ENCODE measurements at regions of chr4 and their contacts with region 1.

Region 1: GRCh38 chr4:81405894-81406401 is 65.8 kb downstream of the RASGEF1B start:
- DNase-seq: peak in 8 of 14 experiments; percentile 6 to 85 (median 34)
- ATAC-seq: peak; percentile 89
- H3K4me3 ChIP-seq: peak overlapping the region; percentile 1
- H3K4me3 Mint-ChIP-seq: no peak overlapping the region
- H3K27ac ChIP-seq: no peak overlapping the region
- H3K27ac Mint-ChIP-seq: no peak overlapping the region
- H3K4me1 ChIP-seq: no peaks in the 10 kb centered on the region
- H3K4me1 Mint-ChIP-seq: peaks cover 4% of the 10 kb centered on the region
- H3K27me3 ChIP-seq: no peaks in the 10 kb centered on the region
- H3K27me3 Mint-ChIP-seq: no peaks in the 10 kb centered on the region
- CTCF ChIP-seq: peak; percentile 99

Region 2: DNA sequence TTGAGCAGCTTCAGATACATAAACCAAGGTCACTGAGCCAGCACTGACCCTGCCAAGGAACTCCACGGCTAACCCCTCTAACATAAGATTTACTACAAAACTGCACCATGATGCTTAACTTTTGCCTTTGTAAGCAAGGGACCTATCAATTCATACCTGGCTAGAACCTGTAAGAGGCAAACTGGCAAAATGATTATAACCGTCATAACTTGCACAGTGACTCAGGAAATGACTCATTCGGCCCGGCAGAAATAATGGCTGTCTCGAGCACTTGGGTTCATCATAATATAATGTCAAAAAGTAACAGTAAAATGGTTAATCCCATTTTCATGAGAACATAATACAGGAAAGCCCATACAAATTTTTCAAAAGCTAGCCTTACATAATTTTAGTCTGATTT is 48.6 kb after region 1 on chr4:
- CTCF ChIA-PET with region 1: no interaction called
- POLR2A ChIA-PET with region 1: no interaction called
- intact Hi-C with region 1: no loop called
- DNase-seq: peak in 5 of 14 experiments; percentile 23 to 49 (median 46)
- ATAC-seq: peak; percentile 67
- H3K4me3 ChIP-seq: no peak overlapping the region
- H3K4me3 Mint-ChIP-seq: no peak overlapping the region
- H3K27ac ChIP-seq: no peak overlapping the region
- H3K27ac Mint-ChIP-seq: peak overlapping the region; percentile 22
- H3K4me1 ChIP-seq: no peaks in the 10 kb centered on the region
- H3K4me1 Mint-ChIP-seq: peaks cover 14% of the 10 kb centered on the region
- H3K27me3 ChIP-seq: no peaks in the 10 kb centered on the region
- H3K27me3 Mint-ChIP-seq: no peaks in the 10 kb centered on the region
- CTCF ChIP-seq: no peak

Region 3: GRCh38 chr4:81465395-81466340 is 59.7 kb after region 1 on chr4:
- CTCF ChIA-PET with region 1: no interaction called
- POLR2A ChIA-PET with region 1: no interaction called
- intact Hi-C with region 1: loop called (anchors 2 to 5 kb)
- DNase-seq: no peak
- ATAC-seq: no peak
- H3K4me3 ChIP-seq: no peak overlapping the region
- H3K4me3 Mint-ChIP-seq: no peak overlapping the region
- H3K27ac ChIP-seq: no peak overlapping the region
- H3K27ac Mint-ChIP-seq: no peak overlapping the region
- H3K4me1 ChIP-seq: peaks cover 9% of the 10 kb centered on the region
- H3K4me1 Mint-ChIP-seq: peaks cover 61% of the 10 kb centered on the region
- H3K27me3 ChIP-seq: no peaks in the 10 kb centered on the region
- H3K27me3 Mint-ChIP-seq: no peaks in the 10 kb centered on the region
- CTCF ChIP-seq: no peak

Region 4: GRCh38 chr4:81844717-81845116 is 438.8 kb after region 1 on chr4:
- CTCF ChIA-PET with region 1: interaction called, 4 read pairs
- POLR2A ChIA-PET with region 1: no interaction called
- intact Hi-C with region 1: loop called (anchors 1 kb)
- DNase-seq: peak; percentile 38 to 82 (median 58)
- ATAC-seq: peak; percentile 95
- H3K4me3 ChIP-seq: no peak overlapping the region
- H3K4me3 Mint-ChIP-seq: no peak overlapping the region
- H3K27ac ChIP-seq: no peak overlapping the region
- H3K27ac Mint-ChIP-seq: no peak overlapping the region
- H3K4me1 ChIP-seq: no peaks in the 10 kb centered on the region
- H3K4me1 Mint-ChIP-seq: no peaks in the 10 kb centered on the region
- H3K27me3 ChIP-seq: no peaks in the 10 kb centered on the region
- H3K27me3 Mint-ChIP-seq: no peaks in the 10 kb centered on the region
- CTCF ChIP-seq: peak; percentile 77

Region 5: DNA sequence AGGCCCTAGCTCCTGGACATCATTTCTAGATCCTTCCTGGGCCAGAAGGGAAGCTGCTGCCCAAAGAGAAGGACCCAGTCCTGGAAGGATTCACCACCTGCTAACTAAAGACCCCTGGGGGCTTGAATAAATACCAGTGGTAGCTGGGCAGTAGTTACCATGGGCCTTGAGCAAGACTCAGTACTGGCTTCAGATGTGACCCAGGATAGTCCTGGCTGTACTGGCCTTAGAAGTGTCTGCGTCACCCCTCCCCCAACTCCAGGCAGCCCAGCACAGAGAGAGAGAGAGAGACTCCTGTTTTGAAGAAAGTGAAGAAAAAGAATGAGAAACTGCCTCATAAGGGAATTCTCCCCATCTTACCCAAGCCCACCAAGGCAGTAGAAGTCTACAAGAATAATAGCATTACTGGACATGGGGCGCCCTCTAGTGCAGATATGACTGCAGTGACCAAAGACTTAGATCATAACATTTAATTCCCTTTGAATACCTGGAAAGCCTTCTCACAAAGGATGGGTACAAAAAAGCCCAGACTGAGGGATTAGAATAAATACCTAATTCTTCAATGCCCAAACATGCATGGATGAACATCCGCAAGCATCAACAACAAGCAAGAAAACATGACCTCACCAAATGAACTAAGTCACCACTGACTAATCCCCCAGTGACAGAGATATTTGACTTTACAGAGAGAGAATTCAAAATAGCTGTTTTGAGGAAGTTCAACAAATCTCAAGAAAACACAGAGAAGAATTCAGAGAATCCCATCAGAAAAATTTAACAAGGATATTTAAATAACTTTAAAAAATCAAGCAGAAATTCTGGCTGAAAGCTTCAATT is 796.1 kb after region 1 on chr4:
- CTCF ChIA-PET with region 1: no interaction called
- POLR2A ChIA-PET with region 1: no interaction called
- intact Hi-C with region 1: loop called (anchors 1 to 2 kb)
- DNase-seq: peak in 13 of 14 experiments; percentile 5 to 72 (median 34)
- ATAC-seq: peak; percentile 65
- H3K4me3 ChIP-seq: no peak overlapping the region
- H3K4me3 Mint-ChIP-seq: no peak overlapping the region
- H3K27ac ChIP-seq: no peak overlapping the region
- H3K27ac Mint-ChIP-seq: no peak overlapping the region
- H3K4me1 ChIP-seq: peaks cover 5% of the 10 kb centered on the region
- H3K4me1 Mint-ChIP-seq: peaks cover 10% of the 10 kb centered on the region
- H3K27me3 ChIP-seq: no peaks in the 10 kb centered on the region
- H3K27me3 Mint-ChIP-seq: peaks cover 8% of the 10 kb centered on the region
- CTCF ChIP-seq: peak; percentile 62

Region 6: DNA sequence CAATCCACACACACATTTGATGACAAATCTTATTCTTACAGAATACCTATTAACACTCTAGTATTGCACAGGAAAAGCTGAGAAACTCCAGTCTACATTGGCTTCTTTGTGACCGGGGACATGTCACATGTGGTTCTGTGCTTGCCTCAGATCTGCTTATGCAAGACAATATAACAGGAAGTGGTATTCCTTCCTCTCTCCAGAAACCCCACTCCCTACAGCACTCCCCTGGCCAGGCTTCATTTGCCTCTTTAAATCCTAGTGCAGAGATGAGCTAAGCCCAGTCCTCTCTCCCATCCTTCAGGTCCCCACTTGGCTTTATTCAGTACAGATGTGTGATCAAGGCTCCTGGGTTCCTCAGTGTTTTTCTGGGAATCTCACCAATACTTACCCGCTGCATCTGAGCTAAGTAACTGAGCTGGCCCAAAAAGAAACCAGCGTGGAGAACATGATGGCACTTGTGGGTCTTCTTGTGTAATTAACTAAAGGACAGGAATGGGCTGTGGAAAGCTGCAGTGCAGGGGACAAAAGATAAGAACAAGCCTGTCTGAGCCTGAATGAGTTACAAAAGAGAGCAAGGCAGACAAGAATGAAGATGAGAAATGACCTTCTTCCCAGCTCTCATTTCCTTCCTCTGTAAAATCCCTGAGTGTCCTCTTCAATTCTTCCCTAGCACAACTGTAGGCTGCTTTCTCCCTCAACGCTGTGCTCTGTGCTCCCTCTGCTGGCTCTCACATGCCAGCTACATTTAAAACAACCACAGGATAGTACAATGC is 862.3 kb after region 1 on chr4:
- CTCF ChIA-PET with region 1: no interaction called
- POLR2A ChIA-PET with region 1: no interaction called
- intact Hi-C with region 1: loop called (anchors 1 to 2 kb)
- DNase-seq: peak in 12 of 14 experiments; percentile 12 to 76 (median 34)
- ATAC-seq: peak; percentile 92
- H3K4me3 ChIP-seq: no peak overlapping the region
- H3K4me3 Mint-ChIP-seq: peak overlapping the region; percentile 70
- H3K27ac ChIP-seq: no peak overlapping the region
- H3K27ac Mint-ChIP-seq: peak overlapping the region; percentile 11
- H3K4me1 ChIP-seq: peaks cover 18% of the 10 kb centered on the region
- H3K4me1 Mint-ChIP-seq: peaks cover 34% of the 10 kb centered on the region
- H3K27me3 ChIP-seq: no peaks in the 10 kb centered on the region
- H3K27me3 Mint-ChIP-seq: no peaks in the 10 kb centered on the region
- CTCF ChIP-seq: peak; percentile 91

Region 7: GRCh38 chr4:82360298-82361177 is 954.6 kb after region 1 on chr4:
- CTCF ChIA-PET with region 1: no interaction called
- POLR2A ChIA-PET with region 1: no interaction called
- intact Hi-C with region 1: loop called (anchors 5 to 10 kb)
- DNase-seq: peak in 3 of 14 experiments; percentile 50 to 61 (median 61)
- ATAC-seq: peak; percentile 80
- H3K4me3 ChIP-seq: no peak overlapping the region
- H3K4me3 Mint-ChIP-seq: peak overlapping the region; percentile 36
- H3K27ac ChIP-seq: peak overlapping the region in 1 of 2 donors; percentile 7
- H3K27ac Mint-ChIP-seq: peak overlapping the region; percentile 60
- H3K4me1 ChIP-seq: peaks cover 25% of the 10 kb centered on the region
- H3K4me1 Mint-ChIP-seq: peaks cover 96% of the 10 kb centered on the region
- H3K27me3 ChIP-seq: peaks cover 0 to 2% of the 10 kb centered on the region in 2 experiments
- H3K27me3 Mint-ChIP-seq: no peaks in the 10 kb centered on the region
- CTCF ChIP-seq: peak; percentile 72

Measured in CD4-positive, alpha-beta T cell (primary cell).